Aorta (tissue), 5 donors: ENCODE measurements at regions of chr6 and their contacts with region 1.

Region 1: GRCh38 chr6:8063761-8064637 is at the start of gene BLOC1S5:
- DNase-seq: peak; percentile 98
- ATAC-seq: peak; percentile 99
- H3K4me3 ChIP-seq: peak within 1 kb of the TSS; percentile 72 to 94
- H3K27ac ChIP-seq: peak within 1 kb of the TSS in 1 of 2 donors; percentile 96
- H3K4me1 ChIP-seq: no peaks in the 10 kb centered on the region
- H3K27me3 ChIP-seq: no peaks in the 10 kb centered on the region
- total RNA-seq, gene BLOC1S5: 11.6 to 24.0 TPM

Region 2: GRCh38 chr6:7312616-7313504 is 751.1 kb before region 1 on chr6 and contains the start of gene SSR1:
- intact Hi-C with region 1: loop called in 1 of 2 experiments (anchors 10 kb)
- DNase-seq: peak; percentile 99
- ATAC-seq: peak; percentile 100
- H3K4me3 ChIP-seq: peak within 1 kb of the TSS; percentile 54 to 69
- H3K27ac ChIP-seq: peak within 1 kb of the TSS; percentile 39 to 59
- H3K4me1 ChIP-seq: peaks cover 0 to 1% of the 10 kb centered on the region in 2 donors
- H3K27me3 ChIP-seq: no peaks in the 10 kb centered on the region
- total RNA-seq, gene SSR1: 114 to 125 TPM

Region 3: DNA sequence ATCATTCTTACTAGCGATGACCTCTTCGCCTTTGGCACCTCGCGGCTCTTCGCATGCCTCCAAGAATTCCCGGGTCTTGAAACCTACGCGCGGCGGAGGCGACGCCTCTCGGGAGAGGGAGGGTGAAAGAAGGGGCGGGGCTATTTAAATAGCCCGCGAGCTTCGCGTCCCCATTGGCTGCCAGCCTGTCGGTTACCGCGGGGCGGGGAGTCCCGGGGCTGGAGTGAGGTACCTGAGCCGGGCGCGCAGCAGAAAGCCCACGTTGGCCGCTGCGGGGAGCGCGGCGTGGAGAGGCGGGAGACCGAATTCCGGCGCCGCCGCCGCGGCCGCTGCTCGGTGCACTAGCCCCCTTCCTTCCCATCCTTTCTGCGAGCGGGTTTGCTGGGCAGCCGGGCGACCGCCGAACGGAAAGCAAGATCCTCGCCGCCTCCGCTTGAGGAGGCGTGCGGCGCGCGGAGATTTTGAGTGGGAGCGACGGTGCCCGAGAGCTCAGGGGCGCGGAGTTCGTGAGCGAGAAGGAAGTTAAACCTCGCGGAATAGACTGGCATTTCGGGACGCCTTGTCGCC is 338.1 kb before region 1 on chr6 and contains the start of gene BMP6:
- intact Hi-C with region 1: loop called (anchors 2 to 5 kb)
- DNase-seq: peak; percentile 86 to 93
- ATAC-seq: peak; percentile 94
- H3K4me3 ChIP-seq: peak within 1 kb of the TSS; percentile 9 to 47
- H3K27ac ChIP-seq: no peak within 1 kb of the TSS
- H3K4me1 ChIP-seq: no peaks in the 10 kb centered on the region
- H3K27me3 ChIP-seq: no peaks in the 10 kb centered on the region
- total RNA-seq, gene BMP6: 1.2 to 5.2 TPM

Region 4: DNA sequence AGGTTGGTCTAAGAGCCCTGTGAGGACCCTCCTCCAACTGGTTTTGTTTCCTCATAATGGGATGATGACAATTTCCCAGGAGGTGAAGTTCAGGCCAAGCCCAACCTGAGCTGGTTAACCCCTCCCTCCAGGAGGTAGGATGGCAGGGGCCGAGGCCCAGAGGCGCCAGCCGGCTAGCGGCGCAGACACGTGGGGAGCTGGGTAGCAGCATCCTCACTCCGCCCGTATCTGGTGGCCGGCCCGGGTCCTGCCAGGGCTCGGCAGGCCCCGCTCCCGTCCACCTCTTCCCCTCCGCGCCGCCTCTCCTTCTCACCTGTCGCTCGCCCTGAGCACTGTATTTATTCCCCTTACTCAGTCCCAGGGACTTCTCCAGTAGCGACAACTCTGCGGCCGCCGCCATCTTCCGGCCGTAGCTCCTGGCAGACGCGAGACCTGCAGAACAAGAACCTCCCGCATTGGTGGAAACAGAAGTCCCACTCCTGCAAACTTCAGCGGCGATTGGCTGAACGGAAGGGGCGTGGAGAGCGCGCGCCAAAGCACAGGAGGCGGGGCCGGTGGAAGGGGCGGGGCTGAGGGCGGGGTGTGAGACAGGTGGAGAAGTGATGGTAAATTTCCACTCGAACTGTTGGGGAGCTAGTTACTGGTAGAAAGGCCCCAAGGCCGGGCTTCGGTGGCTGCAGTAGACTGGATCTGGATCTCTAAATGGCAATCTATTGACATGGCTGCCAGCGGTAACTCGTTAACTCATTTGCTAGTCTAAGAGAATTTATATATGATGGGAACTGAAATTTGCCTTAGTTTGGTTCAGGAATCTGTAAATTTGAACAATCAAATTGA is 38.3 kb after region 1 on chr6 and contains the start of gene EEF1E1:
- intact Hi-C with region 1: loop called in 1 of 2 experiments (anchors 5 kb)
- DNase-seq: peak; percentile 95 to 98
- ATAC-seq: peak; percentile 98
- H3K4me3 ChIP-seq: peak within 1 kb of the TSS; percentile 51 to 83
- H3K27ac ChIP-seq: peak within 1 kb of the TSS in 1 of 2 donors; percentile 31
- H3K4me1 ChIP-seq: peaks cover 0 to 2% of the 10 kb centered on the region in 2 donors
- H3K27me3 ChIP-seq: no peaks in the 10 kb centered on the region
- total RNA-seq, gene EEF1E1: 17.1 to 17.9 TPM